ENCODE measurements at regions of chr5 and their contacts with region 1.

Region 1: GRCh38 chr5:129852747-129853352 is 51.4 kb upstream of the CHSY3 start:
- DNase-seq: peak; percentile 83
- ATAC-seq: no peak

Region 2: GRCh38 chr5:129172580-129172979 is 680.3 kb before region 1 on chr5:
- intact Hi-C with region 1: loop called (anchors 5 kb)
- DNase-seq: no peak
- ATAC-seq: peak; percentile 74